ENCODE measurements at regions of chr7 and their contacts with region 1.

Region 1: GRCh38 chr7:98892609-98893008 is 14.3 kb downstream of the TRRAP start:
- DNase-seq: no peak
- ATAC-seq: no peak
- H3K4me3 ChIP-seq: no peak overlapping the region
- H3K4me3 Mint-ChIP-seq: no peak overlapping the region
- H3K27ac ChIP-seq: no peak overlapping the region
- H3K27ac Mint-ChIP-seq: no peak overlapping the region
- H3K4me1 ChIP-seq: peaks cover 0 to 2% of the 10 kb centered on the region in 2 experiments
- H3K4me1 Mint-ChIP-seq: peaks cover 0 to 15% (median 14%) of the 10 kb centered on the region in 3 donors
- H3K27me3 ChIP-seq: no peaks in the 10 kb centered on the region
- H3K27me3 Mint-ChIP-seq: no peaks in the 10 kb centered on the region

Region 2: DNA sequence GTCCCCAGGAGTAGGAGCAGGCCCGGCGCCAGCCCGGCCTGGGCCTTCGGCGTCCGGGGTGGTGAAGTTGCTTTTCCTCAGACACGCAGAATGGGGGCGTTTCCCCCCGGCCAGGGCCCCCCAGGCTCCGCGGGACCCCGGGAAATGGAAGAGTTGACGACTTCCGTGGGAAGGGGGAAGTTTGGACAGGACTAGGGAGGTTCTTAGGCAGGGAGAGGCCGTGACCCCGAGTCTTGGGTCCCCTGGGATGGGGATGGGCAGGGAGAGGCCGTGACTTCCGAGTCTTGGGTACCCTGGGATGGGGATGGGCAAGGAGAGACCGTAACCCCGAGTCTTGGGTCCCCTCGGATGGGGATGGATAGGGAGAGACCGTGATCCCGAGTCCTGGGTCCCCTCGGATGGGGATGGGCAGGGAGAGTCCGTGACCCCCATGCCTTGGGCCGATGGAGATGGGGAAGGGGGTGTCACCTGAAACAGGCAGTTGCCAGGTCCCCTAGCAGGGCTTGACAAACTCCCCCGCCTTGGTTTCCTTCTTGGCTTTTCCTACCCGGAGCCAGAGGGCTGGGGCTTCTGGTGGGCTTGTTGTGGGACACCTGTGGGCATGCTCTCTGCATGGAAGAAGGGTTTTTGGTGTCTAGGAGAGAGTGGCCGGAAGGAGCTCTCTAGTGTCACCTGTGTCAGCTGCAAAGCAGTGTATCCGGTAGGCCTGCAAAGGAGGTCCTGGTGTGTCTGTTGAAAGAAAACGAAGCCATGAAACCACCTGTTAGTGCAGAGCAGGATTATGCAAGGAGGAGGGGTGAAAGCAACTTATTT is 13.2 kb before region 1 on chr7:
- CTCF ChIA-PET with region 1: interaction called, 3 to 11 read pairs
- POLR2A ChIA-PET with region 1: interaction called in 1 of 2 experiments, 8 read pairs
- DNase-seq: peak; percentile 48 to 85 (median 66)
- ATAC-seq: peak; percentile 70 to 85 (median 78)
- H3K4me3 ChIP-seq: peak overlapping the region; percentile 98 to 100
- H3K4me3 Mint-ChIP-seq: peak overlapping the region; percentile 94 to 96 (median 95)
- H3K27ac ChIP-seq: peak overlapping the region; percentile 87
- H3K27ac Mint-ChIP-seq: peak overlapping the region; percentile 93 to 96
- H3K4me1 ChIP-seq: peaks cover 5 to 19% of the 10 kb centered on the region in 2 experiments
- H3K4me1 Mint-ChIP-seq: peaks cover 24 to 32% (median 29%) of the 10 kb centered on the region in 3 donors
- H3K27me3 ChIP-seq: peaks cover 0 to 2% of the 10 kb centered on the region in 2 experiments
- H3K27me3 Mint-ChIP-seq: peaks cover 0 to 3% of the 10 kb centered on the region in 2 donors

Region 3: DNA sequence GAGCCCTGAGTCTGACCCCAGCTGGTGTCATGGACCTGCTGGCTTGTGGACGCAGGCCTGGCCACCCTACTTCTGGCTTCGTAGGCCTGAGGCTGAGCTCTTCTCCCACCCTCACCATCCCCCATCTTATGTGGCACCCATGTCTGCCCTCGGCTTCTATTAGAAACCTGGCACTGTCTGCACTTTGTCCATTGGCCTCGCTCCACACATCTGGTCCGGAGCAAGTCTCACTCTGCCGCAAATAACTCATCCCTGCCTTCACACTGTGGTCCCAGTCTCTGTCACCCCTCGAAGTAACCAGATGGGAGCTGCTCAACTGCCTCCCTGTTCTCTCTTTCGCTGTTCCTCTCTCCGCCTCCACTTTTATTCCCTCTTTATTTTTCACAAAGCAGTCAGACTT is 64.3 kb after region 1 on chr7:
- CTCF ChIA-PET with region 1: no interaction called
- POLR2A ChIA-PET with region 1: interaction called in 1 of 2 experiments, 11 read pairs
- DNase-seq: no peak
- ATAC-seq: no peak
- H3K4me3 ChIP-seq: no peak overlapping the region
- H3K4me3 Mint-ChIP-seq: no peak overlapping the region
- H3K27ac ChIP-seq: no peak overlapping the region
- H3K27ac Mint-ChIP-seq: no peak overlapping the region
- H3K4me1 ChIP-seq: no peaks in the 10 kb centered on the region
- H3K4me1 Mint-ChIP-seq: no peaks in the 10 kb centered on the region
- H3K27me3 ChIP-seq: no peaks in the 10 kb centered on the region
- H3K27me3 Mint-ChIP-seq: no peaks in the 10 kb centered on the region